ENCODE measurements at regions of chr2 and their contacts with region 1.

Region 1: DNA sequence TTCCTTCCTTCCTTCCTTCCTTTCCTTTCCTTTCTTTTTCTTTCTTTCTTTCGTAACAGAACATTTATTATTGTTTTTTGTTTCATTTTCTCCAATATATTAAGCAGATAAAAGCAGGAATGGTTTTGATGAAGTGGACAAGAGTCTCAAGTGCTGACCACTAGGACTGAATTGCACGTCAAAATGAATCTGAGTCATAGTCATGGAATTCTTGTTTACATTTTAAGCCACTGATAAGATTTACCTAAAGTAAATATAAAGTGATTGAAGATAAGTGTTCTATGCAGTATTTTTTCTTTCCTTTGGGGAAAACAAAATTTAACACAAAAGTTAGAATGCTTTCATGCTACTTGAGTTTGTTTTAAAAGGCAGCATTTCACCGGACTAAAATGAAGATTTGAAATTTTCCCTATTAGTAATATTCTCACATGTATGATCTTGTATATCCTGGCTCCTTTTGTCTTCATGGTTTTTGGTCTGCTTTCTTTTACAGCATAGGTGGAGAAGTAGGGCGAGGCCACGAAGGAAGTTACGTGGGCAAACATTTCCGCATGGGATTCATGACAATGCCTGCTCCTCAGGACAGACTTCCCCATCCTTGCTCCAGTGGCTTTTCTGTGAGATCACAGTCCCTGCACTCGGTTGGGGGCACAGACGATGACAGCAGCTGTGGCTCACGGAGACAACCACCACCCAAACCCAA is 113.5 kb downstream of the NYAP2 start:
- DNase-seq: no peak
- ATAC-seq: no peak
- H3K4me3 Mint-ChIP-seq: no peak overlapping the region
- H3K27ac Mint-ChIP-seq: no peak overlapping the region
- H3K4me1 Mint-ChIP-seq: no peaks in the 10 kb centered on the region
- H3K27me3 Mint-ChIP-seq: peaks cover 6% of the 10 kb centered on the region

Region 2: GRCh38 chr2:225310745-225311144 is 202.3 kb before region 1 on chr2:
- CTCF ChIA-PET with region 1: no interaction called
- POLR2A ChIA-PET with region 1: no interaction called
- intact Hi-C with region 1: no loop called
- DNase-seq: no peak
- ATAC-seq: no peak
- H3K4me3 Mint-ChIP-seq: no peak overlapping the region
- H3K27ac Mint-ChIP-seq: no peak overlapping the region
- H3K4me1 Mint-ChIP-seq: no peaks in the 10 kb centered on the region
- H3K27me3 Mint-ChIP-seq: no peaks in the 10 kb centered on the region

Region 3: DNA sequence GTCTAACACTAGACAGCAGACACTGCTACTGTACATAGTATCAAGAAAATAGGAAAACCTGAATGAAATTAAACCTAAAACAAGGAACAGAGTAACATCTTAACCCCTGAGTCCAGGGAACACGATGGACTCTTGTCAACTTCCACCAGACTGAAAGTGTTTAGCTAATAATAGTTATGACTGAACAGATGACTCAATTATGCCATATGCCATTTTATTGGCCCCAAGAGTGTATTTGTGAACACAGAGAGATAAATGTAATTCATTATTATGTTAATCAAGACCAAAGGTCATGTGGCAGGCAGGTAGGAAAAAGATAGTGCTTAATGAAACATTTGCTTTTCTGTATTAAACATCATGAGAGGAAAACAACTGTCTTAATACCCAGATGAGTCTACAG is 55.5 kb before region 1 on chr2:
- CTCF ChIA-PET with region 1: no interaction called
- POLR2A ChIA-PET with region 1: interaction called, 13 read pairs
- intact Hi-C with region 1: no loop called
- DNase-seq: no peak
- ATAC-seq: no peak
- H3K4me3 Mint-ChIP-seq: no peak overlapping the region
- H3K27ac Mint-ChIP-seq: no peak overlapping the region
- H3K4me1 Mint-ChIP-seq: no peaks in the 10 kb centered on the region
- H3K27me3 Mint-ChIP-seq: peaks cover 7% of the 10 kb centered on the region

Measured in activated CD4-positive, alpha-beta T cell treated with anti-CD3 and anti-CD28 coated beads for 36 hours (primary cell).